ENCODE measurements at regions of chr4 and their contacts with region 1.

Region 1: DNA sequence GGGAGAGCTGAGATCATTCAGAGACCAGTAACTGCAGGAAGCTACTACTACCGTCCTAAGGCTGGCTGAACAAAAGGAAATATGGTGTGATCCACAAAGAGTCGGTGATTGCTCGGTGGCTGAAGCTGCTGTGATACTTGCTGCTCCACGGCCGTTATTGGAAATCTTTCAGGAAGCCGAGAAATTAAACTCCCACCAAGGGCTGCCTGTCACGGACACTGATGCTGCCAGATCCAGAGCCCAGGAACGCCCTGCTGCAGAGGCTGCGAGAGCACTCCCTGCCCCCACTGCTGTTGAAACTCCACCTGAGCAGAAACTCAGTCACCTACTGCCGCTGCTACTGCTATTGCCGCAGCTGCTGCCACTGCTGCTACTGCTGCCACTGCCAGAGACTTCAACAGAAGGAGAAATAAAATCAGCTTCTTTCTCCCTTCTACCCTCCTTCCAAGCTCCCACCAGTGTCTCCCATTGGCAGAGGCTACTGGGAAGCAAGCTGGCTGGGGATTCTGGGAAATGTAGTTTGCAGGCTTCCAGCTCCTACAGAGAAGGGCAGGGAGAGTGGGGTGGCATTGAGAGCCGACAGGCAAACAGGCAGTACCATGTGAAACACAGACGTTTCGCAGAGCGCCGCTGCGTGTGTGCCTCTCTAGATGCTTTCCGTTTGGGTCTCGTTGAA is 126.0 kb upstream of the ENPP6 start:
- DNase-seq: peak; percentile 39
- ATAC-seq: peak; percentile 50
- H3K4me3 Mint-ChIP-seq: peak overlapping the region; percentile 86
- H3K27ac Mint-ChIP-seq: peak overlapping the region; percentile 83
- H3K4me1 Mint-ChIP-seq: peaks cover 73% of the 10 kb centered on the region
- H3K27me3 Mint-ChIP-seq: no peaks in the 10 kb centered on the region
- CTCF ChIP-seq: no peak

Region 2: DNA sequence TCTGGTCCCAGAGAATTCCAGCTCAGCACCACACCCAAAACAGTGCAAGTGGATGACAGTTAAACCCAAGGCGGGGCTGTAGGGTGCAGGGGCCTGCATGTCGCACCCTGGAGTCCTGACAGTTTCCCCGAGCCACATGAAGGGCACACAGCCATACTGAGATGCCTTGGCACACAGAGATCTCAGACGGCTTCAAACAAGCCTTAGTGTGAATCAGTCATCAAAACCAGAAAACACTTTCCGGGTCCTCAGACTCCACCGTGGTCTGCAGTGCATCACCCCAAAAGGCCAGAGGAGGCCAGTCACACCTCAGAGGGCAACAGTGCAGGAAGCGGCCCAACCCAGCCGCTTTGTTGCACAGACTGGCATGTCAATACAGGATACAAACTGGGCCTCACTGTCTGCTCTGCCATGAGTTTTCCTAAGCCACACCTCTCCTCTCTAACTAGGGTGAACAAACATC is 61.4 kb before region 1 on chr4:
- CTCF ChIA-PET with region 1: interaction called, 5 read pairs
- POLR2A ChIA-PET with region 1: interaction called, 13 read pairs
- intact Hi-C with region 1: no loop called
- DNase-seq: no peak
- ATAC-seq: peak; percentile 40
- H3K4me3 Mint-ChIP-seq: peak overlapping the region; percentile 32
- H3K27ac Mint-ChIP-seq: peak overlapping the region; percentile 83
- H3K4me1 Mint-ChIP-seq: peaks cover 66% of the 10 kb centered on the region
- H3K27me3 Mint-ChIP-seq: no peaks in the 10 kb centered on the region
- CTCF ChIP-seq: no peak

Region 3: GRCh38 chr4:184318852-184319251 is 24.8 kb before region 1 on chr4:
- CTCF ChIA-PET with region 1: interaction called, 4 read pairs
- POLR2A ChIA-PET with region 1: interaction called, 33 read pairs
- intact Hi-C with region 1: loop called (anchors 1 kb)
- DNase-seq: no peak
- ATAC-seq: no peak
- H3K4me3 Mint-ChIP-seq: peak overlapping the region; percentile 24
- H3K27ac Mint-ChIP-seq: peak overlapping the region; percentile 98
- H3K4me1 Mint-ChIP-seq: peaks cover 73% of the 10 kb centered on the region
- H3K27me3 Mint-ChIP-seq: no peaks in the 10 kb centered on the region
- CTCF ChIP-seq: no peak

Region 4: GRCh38 chr4:184355111-184355604 is 11.5 kb after region 1 on chr4:
- CTCF ChIA-PET with region 1: no interaction called
- POLR2A ChIA-PET with region 1: interaction called, 9 read pairs
- intact Hi-C with region 1: loop called (anchors 1 kb)
- DNase-seq: no peak
- ATAC-seq: peak; percentile 58
- H3K4me3 Mint-ChIP-seq: no peak overlapping the region
- H3K27ac Mint-ChIP-seq: peak overlapping the region; percentile 27
- H3K4me1 Mint-ChIP-seq: peaks cover 33% of the 10 kb centered on the region
- H3K27me3 Mint-ChIP-seq: no peaks in the 10 kb centered on the region
- CTCF ChIP-seq: no peak

Region 5: DNA sequence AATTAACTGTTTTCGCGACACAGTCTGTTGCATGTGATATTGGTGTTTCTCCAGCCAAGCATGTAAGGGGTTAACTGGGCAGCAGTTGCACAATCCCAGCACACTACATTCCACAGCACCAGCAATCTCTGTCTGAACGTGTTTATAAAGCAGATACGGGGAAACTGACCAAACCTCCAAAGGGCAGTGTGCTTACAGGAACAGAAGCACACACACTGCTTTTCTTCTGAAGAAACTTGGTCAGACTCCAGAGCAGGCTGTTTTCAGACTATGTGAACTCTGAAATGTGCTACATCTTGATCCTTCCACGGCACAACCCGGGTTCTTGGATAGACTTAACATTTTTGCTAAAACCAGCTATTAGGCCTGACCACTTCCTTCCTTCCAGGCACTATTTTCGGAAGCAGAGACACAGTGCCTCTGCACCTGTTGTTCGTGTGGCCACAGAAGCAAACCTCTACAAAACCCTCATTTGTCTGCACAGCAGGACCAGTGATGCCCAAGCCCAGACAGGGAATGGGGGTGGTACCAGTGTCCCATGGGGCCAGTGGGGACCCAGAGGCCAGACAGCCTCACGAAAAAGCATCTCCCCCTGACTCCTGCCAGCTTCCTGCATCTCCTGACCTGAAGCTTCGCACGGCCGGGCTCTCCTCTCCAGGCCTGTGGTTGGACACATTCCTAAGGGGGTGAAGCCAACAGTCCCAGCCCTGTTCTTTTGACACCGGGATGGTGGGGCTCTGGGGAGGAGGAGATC is 40.6 kb after region 1 on chr4:
- CTCF ChIA-PET with region 1: no interaction called
- POLR2A ChIA-PET with region 1: interaction called, 43 read pairs
- intact Hi-C with region 1: loop called (anchors 1 kb)
- DNase-seq: no peak
- ATAC-seq: peak; percentile 36
- H3K4me3 Mint-ChIP-seq: peak overlapping the region; percentile 72
- H3K27ac Mint-ChIP-seq: peak overlapping the region; percentile 79
- H3K4me1 Mint-ChIP-seq: peaks cover 88% of the 10 kb centered on the region
- H3K27me3 Mint-ChIP-seq: no peaks in the 10 kb centered on the region
- CTCF ChIP-seq: no peak

Region 6: GRCh38 chr4:184942444-184943425 is 599.1 kb after region 1 on chr4:
- CTCF ChIA-PET with region 1: no interaction called
- POLR2A ChIA-PET with region 1: no interaction called
- intact Hi-C with region 1: no loop called
- DNase-seq: no peak
- ATAC-seq: no peak
- H3K4me3 Mint-ChIP-seq: no peak overlapping the region
- H3K27ac Mint-ChIP-seq: no peak overlapping the region
- H3K4me1 Mint-ChIP-seq: no peaks in the 10 kb centered on the region
- H3K27me3 Mint-ChIP-seq: peaks cover 9% of the 10 kb centered on the region
- CTCF ChIP-seq: no peak

Measured in activated B cell treated with CpG ODN at 0.5 μM for 24 hours (primary cell).